ENCODE measurements at regions of chr7 and their contacts with region 1.

Region 1: DNA sequence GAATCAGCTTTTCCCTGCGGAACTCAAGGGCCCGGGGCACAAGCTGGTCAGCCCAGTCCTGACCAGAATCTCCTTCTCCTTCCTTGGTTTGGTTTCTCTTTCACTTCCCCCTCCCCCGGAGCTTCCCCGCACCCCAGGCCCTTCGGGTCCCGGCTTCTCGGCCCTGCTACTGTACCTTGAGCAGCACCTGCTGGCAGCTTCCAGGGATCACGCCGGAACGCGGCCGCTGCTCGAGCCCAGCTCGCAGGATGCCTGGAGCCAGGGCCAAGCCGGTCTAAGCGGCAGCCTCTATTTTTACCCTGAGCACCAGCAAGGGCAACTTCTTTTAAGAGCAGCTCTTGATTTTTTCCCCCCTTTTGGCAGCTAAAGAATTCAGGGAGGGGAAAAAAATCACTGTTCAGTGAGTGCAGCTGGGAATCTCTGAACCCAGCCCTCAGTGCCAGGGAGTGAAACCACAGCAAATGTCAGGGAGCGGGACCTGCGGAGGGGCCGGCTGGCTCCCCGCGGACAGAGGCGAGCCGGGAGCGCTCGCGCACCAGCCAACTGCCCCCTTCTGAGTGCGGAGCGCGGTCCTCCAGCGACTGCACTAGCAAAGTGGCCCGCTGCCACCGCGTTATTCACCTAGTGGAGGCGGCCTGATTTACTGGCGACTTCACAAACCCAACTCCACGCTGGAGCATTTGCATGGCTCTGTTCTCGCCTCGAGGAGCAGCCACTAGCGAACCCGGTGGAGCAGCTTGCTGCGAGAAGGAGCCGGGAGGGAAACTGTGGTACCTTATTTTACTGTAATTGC is 2.4 kb upstream of the INHBA start:
- DNase-seq: peak; percentile 77
- H3K4me3 ChIP-seq: peak overlapping the region; percentile 32 to 39
- H3K27ac ChIP-seq: peak overlapping the region; percentile 15 to 58
- H3K4me1 ChIP-seq: peaks cover 3% of the 10 kb centered on the region
- H3K27me3 ChIP-seq: no peaks in the 10 kb centered on the region
- CTCF ChIP-seq: peak; percentile 39 to 71 (median 53)
- POLR2A ChIP-seq: no peak

Region 2: DNA sequence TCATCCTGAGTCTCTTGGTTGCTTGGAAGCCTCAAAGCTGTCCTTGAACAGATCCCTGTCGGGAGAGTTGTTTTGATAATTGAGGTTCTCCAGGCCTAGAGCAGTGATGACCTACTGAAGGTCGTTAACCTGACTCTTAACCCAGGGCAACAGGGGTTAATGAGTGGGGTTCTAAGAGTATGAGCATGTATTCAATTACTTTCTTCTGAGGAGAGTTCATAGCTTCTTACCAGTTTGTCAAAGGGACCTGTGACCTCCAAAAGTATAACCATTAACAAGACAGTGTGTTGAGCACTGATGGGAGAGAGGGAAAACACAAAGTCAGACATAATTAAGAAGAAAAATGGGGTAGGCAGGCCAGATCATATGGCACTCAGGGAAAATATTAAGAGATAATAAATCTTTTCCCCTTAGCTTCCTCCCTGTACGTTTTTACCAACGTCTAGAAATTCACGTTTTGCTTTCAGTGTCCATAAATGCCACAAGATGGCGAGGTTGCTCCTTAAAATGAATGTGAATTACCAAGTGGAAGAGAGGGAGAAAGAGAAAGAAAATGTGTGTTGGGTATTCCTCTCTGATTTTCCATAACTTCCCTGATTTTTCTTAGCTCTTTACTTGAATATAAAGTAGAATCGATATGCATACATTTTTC is 1472.9 kb before region 1 on chr7:
- intact Hi-C with region 1: loop called (anchors 10 kb)
- DNase-seq: peak; percentile 9
- H3K4me3 ChIP-seq: no peak overlapping the region
- H3K27ac ChIP-seq: no peak overlapping the region
- H3K4me1 ChIP-seq: no peaks in the 10 kb centered on the region
- H3K27me3 ChIP-seq: no peaks in the 10 kb centered on the region
- CTCF ChIP-seq: peak in 3 of 4 experiments; percentile 46 to 67 (median 61)
- POLR2A ChIP-seq: no peak

Region 3: GRCh38 chr7:40329601-40330153 is 1375.6 kb before region 1 on chr7:
- intact Hi-C with region 1: loop called (anchors 5 kb)
- DNase-seq: no peak
- H3K4me3 ChIP-seq: no peak overlapping the region
- H3K27ac ChIP-seq: no peak overlapping the region
- H3K4me1 ChIP-seq: no peaks in the 10 kb centered on the region
- H3K27me3 ChIP-seq: no peaks in the 10 kb centered on the region
- CTCF ChIP-seq: peak; percentile 45 to 73 (median 66)
- POLR2A ChIP-seq: no peak

Region 4: GRCh38 chr7:40604601-40605438 is 1100.5 kb before region 1 on chr7:
- intact Hi-C with region 1: loop called (anchors 10 kb)
- DNase-seq: no peak
- H3K4me3 ChIP-seq: no peak overlapping the region
- H3K27ac ChIP-seq: no peak overlapping the region
- H3K4me1 ChIP-seq: no peaks in the 10 kb centered on the region
- H3K27me3 ChIP-seq: no peaks in the 10 kb centered on the region
- CTCF ChIP-seq: peak in 2 of 4 experiments; percentile 33 to 43
- POLR2A ChIP-seq: no peak

Region 5: GRCh38 chr7:40763318-40764287 is 941.7 kb before region 1 on chr7:
- intact Hi-C with region 1: loop called (anchors 5 kb)
- DNase-seq: no peak
- H3K4me3 ChIP-seq: no peak overlapping the region
- H3K27ac ChIP-seq: no peak overlapping the region
- H3K4me1 ChIP-seq: no peaks in the 10 kb centered on the region
- H3K27me3 ChIP-seq: no peaks in the 10 kb centered on the region
- CTCF ChIP-seq: no peak
- POLR2A ChIP-seq: no peak